Left lung (tissue), 14 donors: ENCODE measurements at regions of chr6 and their contacts with region 1.

Region 1: DNA sequence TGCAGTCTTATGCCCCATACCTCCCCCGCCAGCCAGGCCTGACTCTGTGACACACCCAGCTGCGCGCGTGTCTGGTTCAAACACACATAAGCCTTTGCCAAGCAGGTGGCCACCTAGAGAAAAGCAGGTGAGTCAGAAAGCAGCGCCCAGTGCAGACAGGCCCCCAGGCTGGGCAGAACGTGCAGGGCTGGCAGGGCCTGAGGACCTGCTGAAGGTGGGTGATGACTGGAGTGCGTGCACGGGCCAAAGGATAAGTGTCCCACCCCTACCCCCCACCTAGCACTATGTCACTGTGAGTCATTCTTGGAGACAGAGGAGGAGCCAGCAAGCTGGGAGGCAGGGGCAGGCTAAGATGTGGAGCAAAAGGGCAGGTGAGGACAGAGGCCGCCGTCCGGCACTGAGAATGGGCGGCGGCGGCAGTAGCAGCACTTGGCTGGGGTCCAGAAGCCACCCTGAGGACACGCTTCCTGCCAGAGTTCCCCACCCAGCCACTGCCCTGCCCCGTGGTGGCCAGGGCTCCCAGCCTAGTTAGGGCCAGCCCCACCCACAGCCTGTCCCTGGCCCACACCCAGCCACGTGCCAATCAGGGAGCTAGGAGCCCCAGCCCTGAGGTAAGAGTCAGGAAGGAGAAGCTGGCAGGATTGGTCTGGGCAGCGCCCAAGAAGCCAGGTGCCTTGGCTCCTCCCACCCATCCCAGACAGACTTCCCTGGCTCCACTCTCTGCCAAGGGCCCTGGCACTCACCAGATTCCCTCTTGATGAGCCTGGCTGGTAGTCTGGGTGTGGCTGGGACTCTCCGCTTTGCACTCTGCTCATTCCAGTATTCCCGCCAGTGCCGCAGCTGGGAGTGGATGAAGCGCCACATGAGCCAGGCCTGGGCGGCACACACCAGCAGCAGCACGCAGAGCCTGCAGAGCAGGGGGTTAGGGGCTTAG is 72.7 kb downstream of the TRAM2 start:
- DNase-seq: peak in 3 of 4 donors; percentile 70 to 94 (median 93)
- ATAC-seq: peak; percentile 93
- H3K4me3 ChIP-seq: no peak overlapping the region
- H3K27ac ChIP-seq: peak overlapping the region; percentile 53 to 77
- H3K4me1 ChIP-seq: peaks cover 12 to 31% of the 10 kb centered on the region in 2 donors
- H3K27me3 ChIP-seq: no peaks in the 10 kb centered on the region
- CTCF ChIP-seq: no peak

Region 2: DNA sequence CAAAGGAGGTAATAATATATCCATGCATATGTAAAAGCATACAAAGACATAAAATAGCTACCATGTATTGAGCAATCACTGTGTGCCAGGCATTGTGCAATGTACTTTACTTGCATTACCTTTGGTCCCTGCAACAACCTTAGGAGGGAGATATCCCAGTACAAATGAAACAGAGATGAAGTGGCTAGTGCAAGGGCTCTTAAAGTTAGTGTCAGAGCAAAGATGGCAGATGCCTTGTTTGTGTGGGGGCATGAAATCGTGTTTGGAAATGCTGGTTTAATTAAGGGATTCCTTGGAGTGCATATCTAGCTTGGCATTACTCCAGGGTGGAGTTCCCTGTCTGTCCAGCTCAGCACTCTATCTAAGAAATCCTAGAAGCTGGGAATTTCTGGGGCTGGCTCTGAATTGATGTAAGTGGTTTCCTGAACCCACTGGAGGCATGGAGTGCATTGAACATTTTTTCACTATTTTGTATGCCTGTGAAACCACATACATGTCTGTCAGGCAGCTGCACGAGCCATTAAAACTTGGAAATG is 132.4 kb before region 1 on chr6:
- intact Hi-C with region 1: no loop called
- DNase-seq: no peak
- ATAC-seq: peak; percentile 61
- H3K4me3 ChIP-seq: no peak overlapping the region
- H3K27ac ChIP-seq: no peak overlapping the region
- H3K4me1 ChIP-seq: peaks cover 0 to 8% of the 10 kb centered on the region in 2 donors
- H3K27me3 ChIP-seq: no peaks in the 10 kb centered on the region
- CTCF ChIP-seq: no peak

Region 3: GRCh38 chr6:52577022-52577777 is 73.1 kb after region 1 on chr6 and contains the start of gene TRAM2:
- intact Hi-C with region 1: loop called in 1 of 2 experiments (anchors 5 kb)
- DNase-seq: peak; percentile 83 to 97 (median 87)
- ATAC-seq: peak; percentile 88
- H3K4me3 ChIP-seq: peak within 1 kb of the TSS; percentile 77 to 89
- H3K27ac ChIP-seq: peak within 1 kb of the TSS; percentile 95 to 99
- H3K4me1 ChIP-seq: peaks cover 25 to 48% of the 10 kb centered on the region in 2 donors
- H3K27me3 ChIP-seq: no peaks in the 10 kb centered on the region
- CTCF ChIP-seq: no peak
- polyA plus RNA-seq, gene TRAM2: 22.1 to 28.4 (median 26.6) TPM